ENCODE measurements at regions of chr11 and their contacts with region 1.

Region 1: DNA sequence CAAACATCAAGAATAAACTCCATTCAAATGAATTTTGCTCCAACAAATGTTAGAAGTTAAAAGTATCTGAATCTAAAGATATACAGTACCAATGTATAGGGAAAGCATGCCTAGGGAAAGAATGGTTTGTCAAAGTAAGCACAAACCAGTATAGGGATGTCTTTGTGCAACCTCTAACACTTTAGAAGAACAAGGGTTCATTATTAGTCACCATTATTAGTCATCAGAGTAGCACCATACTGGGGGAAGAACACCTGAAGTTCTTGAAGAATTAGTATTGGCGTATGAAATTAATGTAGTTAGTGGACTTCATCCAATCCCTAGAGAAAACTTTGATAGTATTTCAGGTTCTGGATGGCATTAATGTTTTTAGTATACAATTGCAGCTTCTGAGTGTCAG is 943.7 kb downstream of the METTL15 start:
- DNase-seq: no peak
- H3K4me3 Mint-ChIP-seq: no peak overlapping the region
- H3K27ac Mint-ChIP-seq: no peak overlapping the region
- H3K4me1 Mint-ChIP-seq: no peaks in the 10 kb centered on the region
- H3K27me3 Mint-ChIP-seq: no peaks in the 10 kb centered on the region

Region 2: DNA sequence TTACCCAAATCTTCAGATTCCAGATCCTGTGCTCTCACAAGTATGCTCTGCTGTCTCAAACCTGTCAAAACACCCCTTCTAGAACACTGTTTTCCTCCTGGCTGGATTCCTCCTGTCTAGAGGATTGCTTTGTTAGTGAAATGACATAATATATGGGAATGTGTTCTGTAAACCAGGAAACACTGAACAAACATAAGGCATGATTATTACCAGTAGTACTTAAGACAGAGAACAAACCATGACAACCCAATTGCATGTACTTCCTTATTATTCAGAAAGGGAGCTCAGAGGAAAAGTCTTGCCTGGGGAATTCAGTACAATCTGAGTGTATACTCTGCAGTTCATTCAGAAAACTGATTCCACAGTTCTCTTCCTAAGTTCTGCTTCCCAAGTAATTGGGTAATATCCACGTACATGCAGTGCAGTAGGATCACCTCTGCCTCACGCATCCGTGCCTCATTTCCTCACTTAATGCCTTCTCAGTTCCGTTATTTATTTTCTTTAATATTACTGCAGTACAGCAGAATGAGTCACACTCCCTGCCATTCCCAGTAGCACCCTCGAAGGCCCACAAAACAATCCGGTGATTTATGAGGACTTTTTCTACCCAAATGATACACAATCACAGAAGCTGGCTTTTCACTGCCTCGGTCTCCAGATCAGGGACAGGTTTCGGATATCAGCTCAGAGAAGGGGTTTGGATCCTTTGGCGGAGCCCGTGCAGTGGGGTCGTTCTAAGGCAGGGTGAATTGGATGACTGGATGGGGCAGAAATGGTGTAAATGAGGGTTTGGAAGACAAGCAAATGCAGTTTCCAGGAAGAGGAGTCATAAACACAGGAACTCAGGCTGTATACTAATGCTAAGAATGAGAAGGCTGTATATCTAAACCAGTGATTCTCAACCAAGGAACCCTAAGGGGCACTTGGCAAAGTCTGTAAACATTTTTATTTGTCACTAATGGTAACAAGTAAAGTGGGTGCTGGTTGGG is 68.1 kb after region 1 on chr11:
- intact Hi-C with region 1: loop called (anchors 10 kb)
- DNase-seq: no peak
- H3K4me3 Mint-ChIP-seq: no peak overlapping the region
- H3K27ac Mint-ChIP-seq: no peak overlapping the region
- H3K4me1 Mint-ChIP-seq: no peaks in the 10 kb centered on the region
- H3K27me3 Mint-ChIP-seq: no peaks in the 10 kb centered on the region